Activated B cell treated with CpG ODN at 0.5 μM for 24 hours (primary cell): ENCODE measurements at regions of chr17 and their contacts with region 1.

Region 1: DNA sequence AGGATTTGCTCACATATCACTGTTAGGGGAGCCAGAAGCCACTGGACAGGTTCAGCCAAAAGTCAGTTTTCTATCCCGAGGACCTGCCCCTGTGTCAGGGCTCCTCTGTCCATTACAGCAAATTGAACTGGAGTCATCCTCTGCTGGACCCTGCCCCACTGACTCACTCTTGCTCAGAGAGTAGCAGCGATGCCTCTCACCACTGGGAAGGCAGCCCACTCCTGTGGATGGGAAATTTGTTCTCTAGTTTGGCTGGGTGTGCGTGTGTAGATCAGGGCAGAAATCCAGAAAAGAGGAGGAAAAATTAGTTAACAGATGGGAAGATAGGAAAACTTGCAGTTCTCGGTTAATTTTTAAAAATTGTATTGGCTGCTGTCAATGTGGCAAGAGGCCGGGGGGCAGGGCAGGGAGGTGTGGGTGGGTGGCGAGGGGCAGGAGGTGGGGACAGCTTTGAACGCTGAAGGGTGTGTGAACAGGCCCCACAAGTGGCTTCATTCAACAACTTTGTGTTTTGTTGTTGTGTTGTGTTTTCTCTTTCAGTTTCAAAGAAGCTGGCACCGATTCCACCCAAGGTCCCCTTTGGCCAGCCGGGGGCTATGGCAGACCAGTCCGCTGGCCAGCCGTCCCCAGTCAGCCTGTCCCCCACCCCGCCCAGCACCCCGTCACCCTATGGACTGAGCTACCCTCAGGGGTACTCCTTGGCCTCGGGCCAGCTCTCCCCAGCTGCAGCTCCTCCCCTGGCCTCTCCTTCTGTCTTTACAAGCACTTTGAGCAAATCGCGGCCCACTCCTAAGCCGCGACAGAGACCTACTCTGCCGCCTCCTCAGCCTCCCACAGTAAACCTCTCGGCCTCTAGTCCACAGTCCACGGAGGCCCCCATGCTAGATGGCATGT is 33.6 kb downstream of the ELAC2 start:
- DNase-seq: no peak
- ATAC-seq: no peak
- H3K4me3 Mint-ChIP-seq: no peak overlapping the region
- H3K27ac Mint-ChIP-seq: no peak overlapping the region
- H3K4me1 Mint-ChIP-seq: peaks cover 18% of the 10 kb centered on the region
- H3K27me3 Mint-ChIP-seq: no peaks in the 10 kb centered on the region
- CTCF ChIP-seq: no peak

Region 2: DNA sequence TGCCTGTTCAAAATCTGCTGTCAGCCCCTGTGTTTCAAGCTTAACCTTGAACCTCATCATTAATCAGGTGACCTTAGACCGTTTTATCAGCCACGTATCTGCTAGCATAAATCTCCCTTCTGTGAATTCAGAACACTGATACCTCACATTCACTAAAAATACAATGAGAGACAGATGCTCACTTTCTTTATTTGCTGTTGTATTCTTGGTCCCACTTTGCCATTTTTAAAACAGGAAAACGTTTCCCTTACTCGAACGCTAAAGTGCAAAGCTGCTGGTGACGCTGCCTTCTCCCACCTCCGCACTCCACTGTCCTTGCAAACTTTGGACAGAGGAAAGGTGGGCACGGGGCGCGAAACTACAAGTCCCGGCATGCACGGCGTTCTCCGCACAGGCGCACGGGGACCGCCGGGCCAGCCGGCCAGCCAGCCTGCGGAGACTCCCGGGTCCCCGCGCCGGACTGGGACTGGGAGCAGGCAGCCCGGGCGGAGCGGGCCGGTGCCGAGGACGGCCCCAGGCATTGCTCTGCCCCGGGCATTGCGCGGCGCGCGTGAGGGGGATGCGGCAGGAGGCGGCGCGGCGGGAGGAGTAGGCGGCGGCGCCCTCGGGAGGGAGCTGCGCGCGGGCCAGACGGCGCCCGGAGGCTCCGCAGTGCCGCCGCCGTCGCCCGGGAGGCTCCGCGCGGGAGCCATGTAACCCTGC is 195.0 kb before region 1 on chr17 and contains the start of gene ARHGAP44:
- CTCF ChIA-PET with region 1: no interaction called
- POLR2A ChIA-PET with region 1: no interaction called
- intact Hi-C with region 1: loop called (anchors 10 kb)
- DNase-seq: peak; percentile 51
- ATAC-seq: peak; percentile 87
- H3K4me3 Mint-ChIP-seq: peak within 1 kb of the TSS; percentile 84
- H3K27ac Mint-ChIP-seq: no peak within 1 kb of the TSS
- H3K4me1 Mint-ChIP-seq: peaks cover 14% of the 10 kb centered on the region
- H3K27me3 Mint-ChIP-seq: peaks cover 27% of the 10 kb centered on the region
- CTCF ChIP-seq: no peak
- total RNA-seq, gene ARHGAP44: 3.6 and 6.9 TPM in 2 replicates

Region 3: DNA sequence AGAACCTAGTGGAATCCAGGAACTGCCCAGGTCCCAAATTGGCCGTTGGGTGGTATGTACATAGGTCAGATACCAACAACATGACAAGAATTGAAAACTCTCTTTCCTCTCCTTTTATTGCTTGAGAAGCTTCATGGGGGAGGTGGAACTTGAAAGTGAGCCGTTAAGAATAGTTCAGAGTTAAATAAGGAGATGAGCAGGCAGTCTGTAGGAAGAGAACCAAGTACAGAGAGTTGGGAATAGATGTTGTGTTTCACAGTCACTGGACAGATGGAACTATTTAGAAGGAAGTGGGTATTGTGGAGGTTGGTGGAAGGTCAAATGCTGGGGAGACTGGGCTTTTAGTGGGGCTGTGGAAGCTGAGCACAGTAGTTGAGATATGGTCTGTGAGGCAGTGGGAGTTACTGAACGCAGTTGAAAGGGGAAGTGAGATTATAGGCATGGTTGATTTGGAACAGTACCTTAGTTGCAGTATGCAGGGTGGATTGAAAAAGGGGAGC is 168.5 kb before region 1 on chr17:
- CTCF ChIA-PET with region 1: no interaction called
- POLR2A ChIA-PET with region 1: no interaction called
- intact Hi-C with region 1: loop called (anchors 1 kb)
- DNase-seq: no peak
- ATAC-seq: peak; percentile 99
- H3K4me3 Mint-ChIP-seq: peak overlapping the region; percentile 57
- H3K27ac Mint-ChIP-seq: peak overlapping the region; percentile 70
- H3K4me1 Mint-ChIP-seq: peaks cover 28% of the 10 kb centered on the region
- H3K27me3 Mint-ChIP-seq: no peaks in the 10 kb centered on the region
- CTCF ChIP-seq: no peak

Region 4: DNA sequence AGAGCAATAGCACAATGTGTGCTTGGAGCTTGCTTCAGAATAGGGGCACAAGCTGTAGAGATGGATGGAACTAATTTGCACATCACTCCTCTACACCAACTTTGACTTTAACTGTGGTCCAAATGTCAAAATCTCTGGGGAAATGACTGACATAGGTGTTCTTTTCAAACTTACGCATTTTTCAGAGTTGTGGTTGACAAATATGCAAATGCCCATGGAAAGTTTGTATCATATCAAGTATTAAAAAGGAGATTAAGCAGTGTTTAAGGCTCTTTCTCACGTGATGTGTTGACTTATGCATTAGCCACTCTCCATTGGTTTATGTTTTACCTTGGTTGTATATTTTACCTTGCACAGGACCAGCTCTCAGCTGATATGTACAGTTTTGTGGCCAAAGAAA is 43.5 kb before region 1 on chr17:
- CTCF ChIA-PET with region 1: no interaction called
- POLR2A ChIA-PET with region 1: interaction called, 5 read pairs
- intact Hi-C with region 1: loop called (anchors 2 kb)
- DNase-seq: no peak
- ATAC-seq: peak; percentile 78
- H3K4me3 Mint-ChIP-seq: no peak overlapping the region
- H3K27ac Mint-ChIP-seq: no peak overlapping the region
- H3K4me1 Mint-ChIP-seq: peaks cover 16% of the 10 kb centered on the region
- H3K27me3 Mint-ChIP-seq: no peaks in the 10 kb centered on the region
- CTCF ChIP-seq: no peak

Region 5: DNA sequence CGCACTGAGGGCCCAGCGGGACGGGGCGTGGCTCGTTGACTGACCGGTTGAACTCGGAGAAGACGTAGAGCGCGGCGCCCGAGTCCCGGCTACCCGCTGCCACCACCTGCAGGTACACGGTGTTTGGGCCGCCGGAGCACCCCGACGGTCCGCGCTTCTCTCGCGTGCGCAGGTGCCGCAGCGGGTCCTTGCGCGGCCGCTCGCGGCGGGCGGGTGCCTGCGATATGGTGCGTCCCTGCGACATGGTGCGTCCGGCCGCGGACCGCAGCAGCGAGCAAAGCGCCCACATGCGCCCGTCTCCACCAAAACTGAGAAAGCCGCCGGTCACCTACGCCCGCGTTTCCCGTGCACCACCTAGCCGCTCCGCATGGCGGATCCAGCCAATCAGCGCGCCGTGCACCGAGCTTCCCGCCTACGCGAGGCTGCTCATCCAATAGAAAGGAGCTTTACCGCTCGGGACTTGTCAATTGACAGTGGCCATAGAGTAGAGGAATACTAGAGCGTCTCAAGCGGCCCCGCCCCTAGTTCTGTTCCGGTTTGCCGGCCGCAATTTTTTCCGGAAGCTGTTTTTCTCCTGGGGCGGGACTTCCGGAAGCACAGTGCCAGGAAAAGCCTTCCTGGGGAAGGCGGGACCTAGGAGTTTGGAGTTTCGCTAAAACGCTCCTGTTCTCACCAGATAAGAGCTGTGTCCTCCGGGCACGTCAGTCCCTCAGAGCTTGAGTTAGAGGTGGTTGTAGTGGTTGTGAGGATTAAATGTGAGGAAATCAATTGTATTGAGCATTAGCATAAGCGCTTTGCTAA is 33.6 kb after region 1 on chr17 and contains the start of gene ELAC2:
- CTCF ChIA-PET with region 1: no interaction called
- POLR2A ChIA-PET with region 1: interaction called, 4 read pairs
- intact Hi-C with region 1: loop called (anchors 1 kb)
- DNase-seq: peak; percentile 88
- ATAC-seq: peak; percentile 98
- H3K4me3 Mint-ChIP-seq: peak within 1 kb of the TSS; percentile 98
- H3K27ac Mint-ChIP-seq: peak within 1 kb of the TSS; percentile 96
- H3K4me1 Mint-ChIP-seq: peaks cover 17% of the 10 kb centered on the region
- H3K27me3 Mint-ChIP-seq: peaks cover 2% of the 10 kb centered on the region
- CTCF ChIP-seq: no peak
- total RNA-seq, gene ELAC2: 90.3 and 90.6 TPM in 2 replicates

Region 6: DNA sequence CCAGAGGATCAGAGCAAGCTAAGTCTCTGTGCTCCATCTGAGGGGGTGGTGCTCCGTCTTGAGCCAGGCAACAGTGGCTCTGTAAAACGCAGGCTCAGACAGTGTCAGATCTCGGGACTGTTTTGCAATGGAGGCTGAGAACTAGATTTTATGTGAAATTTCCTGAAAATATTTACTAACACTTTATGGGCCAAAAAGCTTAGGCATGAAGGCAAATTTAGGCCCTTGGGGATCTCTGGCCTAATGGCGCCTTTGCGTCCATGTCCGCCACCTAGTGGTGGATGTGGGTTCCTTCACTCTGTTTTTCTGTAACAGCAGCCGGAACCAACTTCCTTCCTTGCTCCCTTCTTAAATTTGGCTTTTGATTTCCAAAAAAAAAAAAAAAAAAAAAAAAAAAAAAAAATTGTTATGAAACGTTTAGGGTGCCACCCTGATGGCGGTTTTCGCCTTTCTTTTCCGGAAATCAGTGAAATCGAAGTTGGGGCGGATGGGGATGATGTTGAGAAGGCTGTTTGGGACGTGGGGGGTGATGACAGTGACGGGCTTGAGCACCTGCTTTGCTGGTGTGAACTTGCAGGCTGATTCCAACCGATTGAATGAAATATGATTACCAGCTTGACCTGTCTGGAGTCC is 47.6 kb after region 1 on chr17:
- CTCF ChIA-PET with region 1: no interaction called
- POLR2A ChIA-PET with region 1: no interaction called
- intact Hi-C with region 1: loop called (anchors 5 kb)
- DNase-seq: no peak
- ATAC-seq: peak; percentile 84
- H3K4me3 Mint-ChIP-seq: no peak overlapping the region
- H3K27ac Mint-ChIP-seq: no peak overlapping the region
- H3K4me1 Mint-ChIP-seq: peaks cover 3% of the 10 kb centered on the region
- H3K27me3 Mint-ChIP-seq: peaks cover 4% of the 10 kb centered on the region
- CTCF ChIP-seq: peak; percentile 54